Gastrocnemius medialis (tissue), 4 donors: ENCODE measurements at regions of chr1 and their contacts with region 1.

Region 1: DNA sequence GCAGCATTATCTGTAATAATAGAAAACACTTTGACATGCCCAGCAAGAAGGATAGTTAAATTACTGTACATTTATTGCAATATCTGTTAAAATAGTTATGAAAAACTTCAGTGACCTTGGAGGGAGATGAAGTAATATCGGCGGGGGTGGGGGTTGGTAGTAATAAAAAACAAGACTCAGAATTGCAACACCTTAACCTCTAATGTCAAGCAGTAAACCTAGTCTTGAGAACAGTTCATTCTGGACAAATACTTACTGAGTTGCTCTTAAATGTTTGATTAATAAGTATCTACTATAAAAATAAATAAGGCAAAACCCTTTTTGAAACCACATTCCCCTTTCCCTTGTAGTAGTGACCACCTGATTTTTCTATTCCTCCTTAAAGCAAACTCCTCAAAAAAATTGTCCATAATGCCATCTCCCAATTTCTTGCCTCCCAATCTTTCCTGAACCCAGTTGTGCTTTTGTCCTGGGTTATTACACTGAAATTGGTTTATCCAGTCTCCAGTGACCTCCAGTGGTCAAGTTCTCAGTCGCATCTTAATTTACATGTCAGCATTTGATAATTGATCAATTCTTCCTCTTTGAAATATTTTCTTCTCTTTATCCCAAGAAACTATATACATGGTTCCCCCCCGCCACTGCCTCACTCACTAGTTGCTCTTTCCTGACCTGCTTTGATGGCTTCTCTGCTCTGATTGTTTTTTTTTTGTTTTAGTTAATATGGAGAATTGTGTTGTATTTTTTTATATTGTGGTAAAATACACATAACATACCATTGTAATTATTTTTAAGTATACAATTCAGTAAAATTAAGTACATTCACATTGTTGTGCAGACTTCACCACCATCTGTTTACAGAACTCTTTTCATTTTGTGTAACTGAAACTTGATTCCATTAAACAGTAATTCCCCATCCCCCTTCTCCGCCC is 36.8 kb downstream of the RAP1A start:
- DNase-seq: peak in 1 of 2 donors; percentile 28
- ATAC-seq: peak; percentile 73 to 81
- H3K4me3 ChIP-seq: no peak overlapping the region
- H3K27ac ChIP-seq: peak overlapping the region; percentile 32 to 47 (median 41)
- H3K4me1 ChIP-seq: peaks cover 28 to 39% of the 10 kb centered on the region in 2 donors
- H3K27me3 ChIP-seq: no peaks in the 10 kb centered on the region
- CTCF ChIP-seq: peak; percentile 58 to 72 (median 68)
- POLR2A ChIP-seq: no peak

Region 2: DNA sequence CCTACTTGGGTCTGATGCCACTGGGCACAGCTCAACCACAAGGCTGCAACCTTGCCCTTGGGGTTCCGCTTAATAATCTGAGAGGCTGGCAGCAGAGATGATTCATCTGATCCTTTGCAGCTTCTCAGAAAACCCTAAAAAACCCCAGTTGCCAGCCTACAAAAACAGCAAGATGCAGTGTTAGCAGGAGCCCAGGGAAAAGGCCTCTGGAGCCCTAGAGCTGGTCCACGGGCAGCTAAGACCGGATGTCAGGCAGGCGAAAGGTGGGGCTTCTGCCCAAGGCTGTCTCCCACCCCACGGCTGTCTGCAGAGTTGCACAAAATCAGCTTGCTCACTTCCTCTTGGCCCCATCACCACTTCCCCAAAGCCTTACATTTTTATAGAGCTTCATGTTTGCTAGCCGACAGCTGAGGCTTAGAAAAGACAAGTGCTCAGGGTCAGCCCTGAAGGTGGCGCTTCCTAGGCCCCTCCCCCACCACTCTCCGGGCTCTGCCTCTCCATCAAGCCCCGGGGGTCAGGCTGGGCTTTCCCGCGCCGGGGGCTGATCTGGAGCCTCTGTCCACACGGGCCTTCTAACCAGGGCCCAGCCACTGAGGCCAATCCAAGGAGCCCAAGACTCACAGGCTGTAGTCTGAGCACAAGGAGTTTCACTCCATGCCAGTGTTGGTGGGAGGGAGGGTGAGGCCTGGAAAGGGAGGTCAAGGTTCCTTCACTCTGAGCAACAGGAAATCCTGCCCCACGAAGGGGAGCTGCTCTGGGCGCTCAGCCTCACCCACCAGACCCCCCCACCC is 148.7 kb before region 1 on chr1:
- in situ Hi-C with region 1: loop called (anchors 5 to 10 kb)
- intact Hi-C with region 1: loop called (anchors 1 kb)
- DNase-seq: peak; percentile 47 to 68
- ATAC-seq: peak; percentile 78 to 86
- H3K4me3 ChIP-seq: peak overlapping the region; percentile 47 to 55 (median 48)
- H3K27ac ChIP-seq: peak overlapping the region; percentile 85 to 92 (median 90)
- H3K4me1 ChIP-seq: peaks cover 17 to 35% of the 10 kb centered on the region in 2 donors
- H3K27me3 ChIP-seq: no peaks in the 10 kb centered on the region
- CTCF ChIP-seq: no peak
- POLR2A ChIP-seq: peak in 1 of 2 donors; percentile 10